IMR-90 (cell line): ENCODE measurements at regions of chr5 and their contacts with region 1.

Region 1: DNA sequence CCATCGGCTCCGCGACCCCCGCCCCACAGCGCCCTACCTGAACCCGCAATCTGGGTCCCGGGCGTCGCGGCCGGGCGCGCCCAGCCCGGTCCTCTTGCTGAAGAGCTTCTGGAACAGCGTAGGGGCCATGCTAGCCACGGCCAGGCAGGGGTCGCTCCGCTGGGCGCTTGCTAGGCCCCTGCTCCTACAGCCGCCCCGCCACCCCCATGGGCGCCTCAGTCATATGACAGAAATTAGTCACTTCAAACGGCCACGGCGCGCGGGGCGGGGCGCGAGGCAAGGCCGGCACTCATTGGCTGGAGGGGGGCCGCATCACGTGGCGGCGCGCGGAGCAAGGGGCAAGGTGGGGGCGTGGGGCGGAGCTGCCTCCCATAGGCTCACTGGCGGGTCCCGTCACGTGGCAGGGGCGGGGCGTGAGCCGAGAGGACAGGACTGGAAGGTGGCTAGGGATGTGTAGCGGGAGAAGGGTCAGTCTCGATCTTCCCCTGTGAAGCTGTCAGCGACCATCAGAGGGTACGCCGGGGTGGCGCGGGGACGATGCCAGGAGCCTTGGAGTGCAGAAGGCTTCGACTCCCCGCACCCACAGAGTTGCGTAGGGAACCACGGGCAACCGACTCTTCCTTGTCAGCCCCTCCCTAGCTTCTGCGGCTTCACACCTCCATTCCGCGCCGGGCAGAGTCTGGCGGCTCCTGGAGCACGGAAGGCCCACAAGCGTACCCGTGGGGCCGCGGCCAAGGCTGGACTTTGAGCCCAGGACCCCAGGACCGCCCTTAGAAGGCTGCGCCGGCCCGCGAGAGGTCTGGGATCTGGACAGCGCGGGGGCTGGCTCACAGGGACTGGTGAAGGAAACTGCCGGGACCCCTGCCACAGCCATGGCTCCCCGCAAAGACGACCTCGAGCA is at the start of gene FNIP1:
- DNase-seq: peak; percentile 93
- ATAC-seq: peak; percentile 97
- H3K4me3 ChIP-seq: peak within 1 kb of the TSS; percentile 88
- H3K27ac ChIP-seq: peak within 1 kb of the TSS; percentile 89
- H3K4me1 ChIP-seq: peaks cover 2% of the 10 kb centered on the region
- H3K27me3 ChIP-seq: no peaks in the 10 kb centered on the region
- CTCF ChIP-seq: 0 out of 2 replicates have a peak, but pooled peaks have one; percentile 5
- POLR2A ChIP-seq: peak; percentile 93
- RAD21 ChIP-seq: no peak
- total RNA-seq, gene FNIP1: 34.1 and 40.0 TPM in 2 replicates

Region 2: DNA sequence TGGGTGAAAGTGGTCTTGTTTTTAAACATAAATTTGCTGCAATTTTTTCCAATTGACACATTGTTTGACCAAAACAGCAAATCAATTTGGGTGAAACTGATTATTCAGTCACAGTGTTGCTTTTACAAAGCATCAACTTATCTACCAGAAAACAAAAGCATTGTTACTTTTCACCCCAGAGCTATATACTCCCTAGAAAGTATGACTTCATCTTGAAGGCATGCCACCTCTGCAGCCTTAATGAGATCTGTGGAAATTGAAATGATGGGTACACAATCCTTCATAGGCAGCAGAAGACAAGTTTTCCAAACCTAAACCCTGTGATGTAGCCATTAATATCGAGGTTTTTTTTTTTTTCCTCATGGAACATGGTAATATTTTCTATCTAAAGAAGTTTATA is 1276.8 kb before region 1 on chr5:
- CTCF ChIA-PET with region 1: no interaction called
- POLR2A ChIA-PET with region 1: no interaction called
- dilution Hi-C with region 1: no loop called
- in situ Hi-C with region 1: no loop called
- intact Hi-C with region 1: no loop called
- DNase-seq: no peak
- ATAC-seq: no peak
- H3K4me3 ChIP-seq: no peak overlapping the region
- H3K27ac ChIP-seq: no peak overlapping the region
- H3K4me1 ChIP-seq: no peaks in the 10 kb centered on the region
- H3K27me3 ChIP-seq: no peaks in the 10 kb centered on the region
- CTCF ChIP-seq: no peak
- POLR2A ChIP-seq: no peak
- RAD21 ChIP-seq: no peak

Region 3: GRCh38 chr5:131436081-131436480 is 361.0 kb before region 1 on chr5:
- CTCF ChIA-PET with region 1: no interaction called
- POLR2A ChIA-PET with region 1: no interaction called
- dilution Hi-C with region 1: no loop called
- in situ Hi-C with region 1: no loop called
- intact Hi-C with region 1: loop called (anchors 10 kb)
- DNase-seq: no peak
- ATAC-seq: no peak
- H3K4me3 ChIP-seq: no peak overlapping the region
- H3K27ac ChIP-seq: no peak overlapping the region
- H3K4me1 ChIP-seq: 0 out of 2 replicates have a peak, but pooled peaks cover 4% of the 10 kb centered on the region
- H3K27me3 ChIP-seq: no peaks in the 10 kb centered on the region
- CTCF ChIP-seq: no peak
- POLR2A ChIP-seq: no peak
- RAD21 ChIP-seq: no peak

Region 4: GRCh38 chr5:131589510-131590348 is 207.3 kb before region 1 on chr5:
- CTCF ChIA-PET with region 1: no interaction called
- POLR2A ChIA-PET with region 1: no interaction called
- dilution Hi-C with region 1: no loop called
- in situ Hi-C with region 1: no loop called
- intact Hi-C with region 1: loop called (anchors 2 kb)
- DNase-seq: peak; percentile 74
- ATAC-seq: peak; percentile 87
- H3K4me3 ChIP-seq: no peak overlapping the region
- H3K27ac ChIP-seq: no peak overlapping the region
- H3K4me1 ChIP-seq: peaks cover 6% of the 10 kb centered on the region
- H3K27me3 ChIP-seq: no peaks in the 10 kb centered on the region
- CTCF ChIP-seq: peak; percentile 90
- POLR2A ChIP-seq: peak; percentile 41; the same call in 1 of the 2 replicates
- RAD21 ChIP-seq: peak; percentile 93

Region 5: DNA sequence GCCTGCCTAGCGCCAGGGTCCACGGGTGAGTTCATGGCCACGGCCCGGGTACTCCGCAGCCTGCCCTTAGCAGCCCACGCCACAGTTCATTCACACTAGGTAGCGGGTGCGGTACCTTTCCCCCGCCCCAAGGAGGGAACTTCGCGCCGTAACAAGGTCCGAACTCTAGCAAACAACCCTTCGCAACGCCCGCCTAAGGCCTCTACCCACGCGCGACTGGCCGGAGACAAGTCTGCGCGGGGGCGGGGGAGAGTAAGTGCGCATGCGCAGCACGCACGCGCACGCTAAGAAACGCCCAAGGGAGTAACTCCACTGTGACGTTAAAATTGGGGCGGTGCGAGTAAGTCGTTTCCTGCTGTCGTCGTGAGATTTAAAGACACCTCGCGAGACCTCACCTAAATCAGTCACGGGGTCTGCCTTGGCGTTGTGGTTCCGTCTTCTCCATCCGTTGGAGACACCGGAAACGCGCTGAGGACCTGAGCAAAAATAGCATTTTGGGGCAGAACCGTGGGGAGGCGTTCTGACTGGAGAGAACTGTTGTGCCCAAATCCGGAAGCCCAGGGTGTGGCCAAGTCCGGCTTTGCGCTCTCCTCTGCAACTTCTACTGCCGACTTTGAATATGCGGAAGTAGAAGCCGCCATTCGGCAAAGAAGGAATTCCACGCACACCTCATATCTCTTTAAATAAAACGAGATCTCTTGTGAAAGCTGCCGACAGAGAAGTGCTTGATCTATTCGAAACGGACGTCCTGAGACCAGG is 161.9 kb before region 1 on chr5 and contains the start of gene RAPGEF6:
- CTCF ChIA-PET with region 1: no interaction called
- POLR2A ChIA-PET with region 1: no interaction called
- dilution Hi-C with region 1: no loop called
- in situ Hi-C with region 1: no loop called
- intact Hi-C with region 1: loop called (anchors 1 kb)
- DNase-seq: peak; percentile 100
- ATAC-seq: peak; percentile 92
- H3K4me3 ChIP-seq: peak within 1 kb of the TSS; percentile 66
- H3K27ac ChIP-seq: peak within 1 kb of the TSS; percentile 93
- H3K4me1 ChIP-seq: peaks cover 5% of the 10 kb centered on the region
- H3K27me3 ChIP-seq: no peaks in the 10 kb centered on the region
- CTCF ChIP-seq: no peak
- POLR2A ChIP-seq: peak; percentile 87
- RAD21 ChIP-seq: no peak
- total RNA-seq, gene RAPGEF6: 18.8 and 30.3 TPM in 2 replicates

Region 6: DNA sequence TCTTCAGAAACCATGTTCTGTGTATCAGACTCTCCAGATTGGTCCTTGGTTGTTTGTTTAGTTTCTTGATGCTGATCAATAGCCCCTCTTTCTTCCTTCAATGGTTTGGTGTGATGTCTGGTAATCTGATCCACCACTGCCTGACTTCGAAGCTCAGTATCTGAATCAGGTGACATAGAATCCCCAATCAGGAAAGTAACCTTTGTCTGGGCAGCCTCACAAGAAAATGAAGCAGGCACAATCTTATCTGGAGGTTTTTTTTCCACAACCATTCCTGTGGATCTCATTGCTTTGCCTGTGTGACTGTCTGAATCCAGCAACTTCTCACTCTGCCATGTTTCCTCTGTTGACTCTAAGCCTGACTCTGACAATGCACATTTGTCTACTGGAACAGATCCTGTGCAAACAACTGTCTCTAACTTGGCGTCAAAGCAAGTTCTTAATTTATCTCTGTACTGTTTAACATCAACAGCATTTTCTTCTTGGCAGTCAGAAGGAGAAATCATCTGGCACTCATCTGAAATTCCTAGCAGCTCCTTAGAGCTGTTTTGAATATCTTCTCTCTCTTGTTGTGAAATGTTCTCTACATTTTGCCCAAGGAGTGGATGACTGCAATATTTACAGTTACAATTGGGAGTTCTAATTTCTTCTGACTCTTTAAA is 124.9 kb before region 1 on chr5:
- CTCF ChIA-PET with region 1: no interaction called
- POLR2A ChIA-PET with region 1: no interaction called
- dilution Hi-C with region 1: no loop called
- in situ Hi-C with region 1: no loop called
- intact Hi-C with region 1: loop called (anchors 1 kb)
- DNase-seq: peak; percentile 95
- ATAC-seq: peak; percentile 91
- H3K4me3 ChIP-seq: no peak overlapping the region
- H3K27ac ChIP-seq: peak overlapping the region; percentile 97; the same call in 1 of the 2 replicates
- H3K4me1 ChIP-seq: peaks cover 20% of the 10 kb centered on the region
- H3K27me3 ChIP-seq: no peaks in the 10 kb centered on the region
- CTCF ChIP-seq: no peak
- POLR2A ChIP-seq: no peak
- RAD21 ChIP-seq: no peak

Region 7: GRCh38 chr5:131747180-131748105 is 49.6 kb before region 1 on chr5:
- CTCF ChIA-PET with region 1: no interaction called
- POLR2A ChIA-PET with region 1: no interaction called
- dilution Hi-C with region 1: no loop called
- in situ Hi-C with region 1: no loop called
- intact Hi-C with region 1: loop called (anchors 5 kb)
- DNase-seq: peak; percentile 48
- ATAC-seq: 0 out of 2 replicates have a peak, but pooled peaks have one; percentile 25
- H3K4me3 ChIP-seq: no peak overlapping the region
- H3K27ac ChIP-seq: no peak overlapping the region
- H3K4me1 ChIP-seq: peaks cover 1% of the 10 kb centered on the region; the same call in 1 of the 2 replicates
- H3K27me3 ChIP-seq: no peaks in the 10 kb centered on the region
- CTCF ChIP-seq: no peak
- POLR2A ChIP-seq: no peak
- RAD21 ChIP-seq: no peak